Right cardiac atrium (tissue), 5 donors: ENCODE measurements at regions of chr1 and their contacts with region 1.

Region 1: GRCh38 chr1:89085781-89086180 is 20.8 kb upstream of the GBP1 start:
- DNase-seq: peak in 1 of 3 donors; percentile 22
- ATAC-seq: peak in 1 of 2 donors; percentile 73
- H3K4me3 ChIP-seq: no peak overlapping the region
- H3K27ac ChIP-seq: no peak overlapping the region
- H3K4me1 ChIP-seq: no peaks in the 10 kb centered on the region
- H3K27me3 ChIP-seq: no peaks in the 10 kb centered on the region

Region 2: DNA sequence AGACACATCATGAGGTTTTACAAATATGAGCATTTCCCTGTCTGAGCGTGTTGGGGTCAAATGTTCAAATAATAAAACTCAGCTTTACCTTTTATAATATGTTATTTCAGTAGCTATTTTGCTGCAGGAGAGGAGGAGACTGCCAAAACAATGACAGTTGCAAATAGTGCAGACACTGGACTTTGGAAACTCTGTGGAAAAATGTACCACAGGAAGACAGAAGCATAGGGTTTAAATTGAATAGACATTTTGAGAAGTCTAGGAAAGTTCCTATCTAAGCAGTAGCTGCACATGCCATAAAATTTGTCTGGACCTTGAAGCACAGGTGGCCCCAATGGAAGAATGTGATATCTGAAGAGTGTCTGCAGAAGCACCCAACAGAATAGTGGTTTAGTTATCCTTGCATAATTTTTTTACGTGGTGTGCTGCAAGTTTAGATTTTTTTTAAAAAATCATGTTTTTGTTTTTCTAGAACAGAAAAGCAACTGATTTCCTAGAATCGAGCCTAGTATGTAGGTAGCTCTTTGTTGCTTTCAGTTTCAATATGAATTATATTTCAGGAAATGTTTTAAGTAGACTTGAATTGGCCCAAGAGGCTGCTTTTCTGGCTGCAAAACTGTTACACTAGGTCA is 200.9 kb after region 1 on chr1:
- intact Hi-C with region 1: loop called in 1 of 4 experiments (anchors 5 kb)
- DNase-seq: no peak
- ATAC-seq: no peak
- H3K4me3 ChIP-seq: peak overlapping the region; percentile 26
- H3K27ac ChIP-seq: no peak overlapping the region
- H3K4me1 ChIP-seq: no peaks in the 10 kb centered on the region
- H3K27me3 ChIP-seq: no peaks in the 10 kb centered on the region

Region 3: DNA sequence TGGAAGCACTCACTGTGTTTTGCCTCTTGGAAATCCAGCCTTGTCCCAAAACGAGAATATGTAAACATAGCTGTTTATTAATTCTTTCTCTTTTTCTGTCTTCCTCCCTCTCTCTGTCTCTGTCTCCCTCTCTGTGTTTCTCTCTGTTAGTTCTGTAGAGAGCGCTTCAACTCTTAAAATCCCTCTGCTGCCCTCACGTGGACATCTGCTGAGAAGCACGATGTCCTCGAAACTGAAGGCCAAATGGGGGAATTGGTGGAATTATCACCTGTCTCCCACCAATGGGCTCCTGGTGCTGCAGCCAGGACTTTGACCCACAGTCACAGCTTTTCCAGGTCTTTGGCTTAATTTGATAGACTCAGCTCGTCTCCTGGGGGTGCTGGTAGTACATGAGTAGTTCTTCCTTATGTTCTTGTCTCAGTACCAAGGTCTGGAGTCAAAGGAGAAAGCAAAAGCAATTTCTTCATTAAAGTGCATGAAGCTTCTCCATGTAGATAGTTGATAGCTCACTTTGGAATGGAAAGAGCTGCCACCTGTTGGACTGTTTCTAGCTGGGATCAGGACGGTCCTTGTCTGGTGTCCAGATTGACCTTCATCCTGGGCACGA is 272.6 kb after region 1 on chr1:
- intact Hi-C with region 1: loop called in 2 of 4 experiments (anchors 5 to 10 kb)
- DNase-seq: peak; percentile 76 to 94 (median 86)
- ATAC-seq: peak; percentile 85 to 90
- H3K4me3 ChIP-seq: no peak overlapping the region
- H3K27ac ChIP-seq: no peak overlapping the region
- H3K4me1 ChIP-seq: peaks cover 1% of the 10 kb centered on the region
- H3K27me3 ChIP-seq: no peaks in the 10 kb centered on the region

Region 4: DNA sequence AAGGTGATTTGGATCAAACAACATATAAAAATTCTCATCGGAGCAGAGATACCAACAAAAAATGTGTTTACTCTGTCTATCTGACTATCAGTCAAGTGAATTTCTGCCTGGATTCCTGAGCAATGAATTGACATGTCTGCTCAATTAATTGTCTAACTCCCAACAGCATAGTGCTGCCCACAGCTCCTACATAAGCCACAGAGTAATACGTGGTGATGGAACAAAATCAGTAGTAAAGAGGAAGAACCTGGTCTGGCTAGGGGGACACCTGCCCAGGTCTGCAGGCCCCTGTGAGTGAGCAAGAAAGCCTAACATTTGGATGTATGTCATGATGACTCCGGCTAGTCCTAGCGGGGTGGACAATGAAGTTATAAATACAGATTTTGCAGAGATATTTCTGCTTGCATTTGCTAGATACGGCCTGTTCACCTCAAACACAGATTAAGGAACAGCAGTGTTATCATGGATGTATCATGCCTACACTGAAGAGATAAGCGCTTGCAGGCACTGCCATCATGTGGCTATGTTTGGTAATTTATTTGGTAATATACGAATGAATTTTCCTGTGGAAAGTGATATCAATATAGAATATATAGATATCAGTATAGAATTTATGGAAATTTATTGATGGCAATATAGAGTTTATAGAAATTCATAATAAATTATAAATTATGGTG is 369.2 kb after region 1 on chr1:
- intact Hi-C with region 1: loop called in 1 of 4 experiments (anchors 5 kb)
- DNase-seq: peak in 2 of 3 donors; percentile 23 to 64
- ATAC-seq: peak in 1 of 2 donors; percentile 38
- H3K4me3 ChIP-seq: no peak overlapping the region
- H3K27ac ChIP-seq: no peak overlapping the region
- H3K4me1 ChIP-seq: no peaks in the 10 kb centered on the region
- H3K27me3 ChIP-seq: peaks cover 3% of the 10 kb centered on the region